ENCODE measurements at regions of chr20 and their contacts with region 1.

Region 1: DNA sequence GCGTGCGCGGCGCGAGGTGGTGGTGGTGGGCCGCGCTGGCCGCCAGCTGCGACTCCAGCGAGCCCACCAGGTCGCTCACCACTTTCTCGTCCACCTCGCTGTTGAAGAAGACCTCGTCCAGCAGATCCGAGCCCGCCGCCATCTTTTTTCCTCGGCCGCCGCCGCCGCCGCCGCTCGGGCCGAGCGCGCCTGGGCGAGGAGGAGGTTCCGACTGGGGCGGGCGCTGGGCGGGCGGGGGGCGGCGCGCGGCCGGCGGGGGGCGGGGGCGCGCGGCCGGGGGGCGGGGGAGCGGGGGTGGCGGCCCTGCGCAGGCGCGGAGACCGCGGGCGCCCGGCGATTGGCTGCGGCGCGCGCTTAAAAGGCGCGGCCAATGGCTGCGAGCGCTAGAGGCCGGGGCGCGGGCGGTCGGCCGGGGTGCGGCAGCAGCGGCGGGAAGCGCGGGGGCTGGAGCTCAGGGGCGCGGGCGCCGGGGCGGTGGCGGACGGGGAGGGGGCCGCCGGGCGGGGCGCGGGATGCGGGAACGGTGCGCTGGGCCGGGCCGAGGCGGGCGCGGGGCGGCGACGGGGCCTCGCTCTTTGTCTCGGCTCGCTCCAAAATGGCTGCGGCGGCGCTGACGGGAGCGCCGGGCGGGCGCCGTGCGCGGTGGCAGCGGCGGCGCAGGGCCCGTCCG is at the start of gene TAF4:
- H3K4me3 Mint-ChIP-seq: peak within 1 kb of the TSS; percentile 82
- H3K27ac Mint-ChIP-seq: peak within 1 kb of the TSS; percentile 87
- H3K4me1 Mint-ChIP-seq: peaks cover 51% of the 10 kb centered on the region
- H3K27me3 Mint-ChIP-seq: peaks cover 21% of the 10 kb centered on the region

Region 2: GRCh38 chr20:62121776-62122631 is 56.2 kb after region 1 on chr20 and contains the start of gene LSM14B:
- intact Hi-C with region 1: loop called (anchors 1 kb)
- H3K4me3 Mint-ChIP-seq: peak within 1 kb of the TSS; percentile 79
- H3K27ac Mint-ChIP-seq: peak within 1 kb of the TSS; percentile 93
- H3K4me1 Mint-ChIP-seq: peaks cover 41% of the 10 kb centered on the region
- H3K27me3 Mint-ChIP-seq: peaks cover 19% of the 10 kb centered on the region

Region 3: GRCh38 chr20:62136283-62137091 is 70.7 kb after region 1 on chr20:
- intact Hi-C with region 1: loop called (anchors 5 kb)
- H3K4me3 Mint-ChIP-seq: no peak overlapping the region
- H3K27ac Mint-ChIP-seq: peak overlapping the region; percentile 8
- H3K4me1 Mint-ChIP-seq: peaks cover 83% of the 10 kb centered on the region
- H3K27me3 Mint-ChIP-seq: no peaks in the 10 kb centered on the region